Psoas muscle (tissue), 8 donors: ENCODE measurements at regions of chr1 and their contacts with region 1.

Region 1: DNA sequence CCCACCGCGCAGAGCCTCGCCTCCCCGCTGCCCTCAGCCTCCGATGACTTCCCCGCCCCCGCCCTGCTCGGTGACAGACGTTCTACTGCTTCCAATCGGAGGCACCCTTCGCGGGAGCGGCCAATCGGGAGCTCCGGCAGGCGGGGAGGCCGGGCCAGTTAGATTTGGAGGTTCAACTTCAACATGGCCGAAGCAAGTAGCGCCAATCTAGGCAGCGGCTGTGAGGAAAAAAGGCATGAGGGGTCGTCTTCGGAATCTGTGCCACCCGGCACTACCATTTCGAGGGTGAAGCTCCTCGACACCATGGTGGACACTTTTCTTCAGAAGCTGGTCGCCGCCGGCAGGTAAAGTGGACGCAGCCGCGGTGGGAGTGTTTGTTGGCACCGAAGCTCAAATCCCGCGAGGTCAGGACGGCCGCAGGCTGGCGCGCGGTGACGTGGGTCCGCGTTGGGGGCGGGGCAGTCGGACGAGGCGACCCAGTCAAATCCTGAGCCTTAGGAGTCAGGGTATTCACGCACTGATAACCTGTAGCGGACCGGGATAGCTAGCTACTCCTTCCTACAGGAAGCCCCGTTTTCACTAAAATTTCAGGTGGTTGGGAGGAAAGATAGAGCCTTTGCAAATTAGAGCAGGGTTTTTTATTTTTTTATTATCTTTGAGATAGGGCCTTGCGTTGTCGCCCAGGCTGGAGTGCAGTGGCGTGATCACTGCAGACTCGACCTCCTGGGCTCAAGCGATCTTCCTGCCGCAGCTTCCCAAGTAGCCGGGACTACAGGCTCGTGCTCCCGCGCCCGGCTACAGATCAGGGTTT is at the start of gene PMF1:
- DNase-seq: peak; percentile 98
- ATAC-seq: peak; percentile 97 to 99 (median 98)
- H3K4me3 ChIP-seq: peak within 1 kb of the TSS; percentile 81
- H3K27ac ChIP-seq: peak within 1 kb of the TSS; percentile 95
- H3K4me1 ChIP-seq: peaks cover 20% of the 10 kb centered on the region
- H3K27me3 ChIP-seq: no peaks in the 10 kb centered on the region
- CTCF ChIP-seq: no peak
- total RNA-seq, gene PMF1: 47.9 to 72.1 (median 65.6) TPM

Region 2: DNA sequence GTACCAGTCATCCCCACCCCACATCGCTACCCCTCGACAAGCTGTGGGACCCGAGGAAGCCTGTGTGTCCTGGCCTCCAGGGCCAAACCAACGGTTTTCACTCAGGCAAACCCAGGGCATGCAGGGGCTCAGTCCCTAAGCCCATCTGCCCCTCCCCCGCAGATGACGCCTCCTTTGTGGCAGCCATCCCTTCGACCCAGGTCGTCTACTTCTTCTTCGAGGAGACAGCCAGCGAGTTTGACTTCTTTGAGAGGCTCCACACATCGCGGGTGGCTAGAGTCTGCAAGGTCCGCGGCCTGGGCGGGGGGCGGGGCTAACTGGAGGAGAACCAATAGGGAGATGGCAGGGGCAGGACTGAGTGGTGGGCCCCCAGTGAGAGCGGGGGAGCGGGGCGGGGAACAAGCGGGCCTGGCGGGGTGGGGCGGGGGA is 52.3 kb before region 1 on chr1:
- intact Hi-C with region 1: loop called in 1 of 2 experiments (anchors 5 kb)
- DNase-seq: peak; percentile 93 to 94
- ATAC-seq: peak; percentile 85 to 90 (median 86)
- H3K4me3 ChIP-seq: peak overlapping the region; percentile 69
- H3K27ac ChIP-seq: peak overlapping the region; percentile 95
- H3K4me1 ChIP-seq: peaks cover 14% of the 10 kb centered on the region
- H3K27me3 ChIP-seq: no peaks in the 10 kb centered on the region
- CTCF ChIP-seq: no peak

Region 3: GRCh38 chr1:156177919-156178654 is 35.0 kb before region 1 on chr1:
- intact Hi-C with region 1: loop called in 1 of 2 experiments (anchors 2 kb)
- DNase-seq: no peak
- ATAC-seq: no peak
- H3K4me3 ChIP-seq: no peak overlapping the region
- H3K27ac ChIP-seq: no peak overlapping the region
- H3K4me1 ChIP-seq: no peaks in the 10 kb centered on the region
- H3K27me3 ChIP-seq: peaks cover 0 to 4% (median 0%) of the 10 kb centered on the region in 3 donors
- CTCF ChIP-seq: no peak

Region 4: DNA sequence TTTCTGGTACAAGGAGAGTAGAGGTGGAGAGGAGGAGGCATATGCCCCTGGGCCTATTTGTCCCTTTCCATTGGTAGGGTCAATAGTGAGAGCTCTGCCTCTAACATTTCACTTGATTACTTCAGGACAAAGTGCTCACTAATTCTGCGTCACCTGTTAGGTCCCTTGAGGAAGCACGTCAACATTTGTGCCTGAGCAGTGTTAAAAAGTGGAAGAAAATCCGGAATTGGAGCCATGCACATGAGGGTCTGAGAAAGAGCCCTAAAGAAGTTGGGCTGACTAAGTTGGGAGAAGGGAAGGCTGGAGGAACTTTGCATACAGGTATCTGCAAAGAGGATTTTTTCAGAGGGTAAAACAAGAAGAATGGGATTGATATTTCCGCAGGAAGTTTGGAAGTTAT is 17.2 kb before region 1 on chr1:
- intact Hi-C with region 1: loop called in 1 of 2 experiments (anchors 2 kb)
- DNase-seq: no peak
- ATAC-seq: no peak
- H3K4me3 ChIP-seq: no peak overlapping the region
- H3K27ac ChIP-seq: no peak overlapping the region
- H3K4me1 ChIP-seq: peaks cover 36% of the 10 kb centered on the region
- H3K27me3 ChIP-seq: no peaks in the 10 kb centered on the region
- CTCF ChIP-seq: no peak